ENCODE measurements at regions of chr2 and their contacts with region 1.

Region 1: GRCh38 chr2:46610021-46610420 is 130.7 kb downstream of the TMEM247 start:
- DNase-seq: no peak
- H3K4me3 ChIP-seq: no peak overlapping the region
- CTCF ChIP-seq: no peak
- POLR2A ChIP-seq: no peak

Region 2: GRCh38 chr2:46589358-46589757 is 20.7 kb before region 1 on chr2:
- intact Hi-C with region 1: loop called (anchors 1 kb)
- DNase-seq: no peak
- H3K4me3 ChIP-seq: no peak overlapping the region
- CTCF ChIP-seq: no peak
- POLR2A ChIP-seq: no peak

Region 3: DNA sequence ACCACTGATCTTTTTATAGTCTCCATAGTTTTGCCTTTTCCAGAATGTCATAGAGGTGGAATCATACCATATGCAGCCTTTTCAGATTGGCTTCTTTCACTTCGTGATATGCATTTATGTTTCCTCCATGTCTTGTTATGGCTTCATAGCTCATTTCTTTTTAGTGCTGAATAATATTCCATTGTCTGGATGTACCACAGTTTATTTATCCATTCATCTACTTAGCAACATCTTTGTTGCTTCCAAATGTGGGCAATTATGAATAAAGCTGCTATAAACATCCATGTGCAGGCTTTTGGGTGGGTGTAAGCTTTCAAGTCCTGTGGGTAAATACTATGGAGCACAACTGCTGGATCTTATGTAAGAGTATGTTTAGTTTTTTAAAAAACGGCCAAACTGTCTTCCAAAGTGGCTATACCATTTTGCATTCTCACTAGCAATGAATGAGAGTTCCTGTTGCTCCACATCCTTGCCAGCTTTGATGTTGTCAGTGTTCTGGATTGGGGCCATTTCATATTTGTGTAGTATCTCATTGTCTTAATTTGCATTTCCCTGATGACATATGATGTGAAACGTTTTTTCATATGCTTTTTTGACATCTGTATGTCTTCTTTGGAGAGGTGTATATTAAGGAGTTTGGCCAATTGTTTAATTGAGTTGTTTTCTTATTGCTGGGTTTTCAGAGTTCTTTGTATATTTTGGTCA is 524.5 kb after region 1 on chr2:
- intact Hi-C with region 1: no loop called
- DNase-seq: no peak
- H3K4me3 ChIP-seq: no peak overlapping the region
- CTCF ChIP-seq: no peak
- POLR2A ChIP-seq: no peak

Measured in lower leg skin (tissue), 4 donors.